ENCODE measurements at regions of chr3 and their contacts with region 1.

Region 1: GRCh38 chr3:45817831-45818522 is 21.6 kb upstream of the SLC6A20 start:
- DNase-seq: peak; percentile 82 to 89
- ATAC-seq: peak; percentile 77 to 81
- H3K4me3 ChIP-seq: no peak overlapping the region
- H3K27ac ChIP-seq: peak overlapping the region; percentile 82 to 96 (median 88)
- H3K4me1 ChIP-seq: peaks cover 41 to 66% of the 10 kb centered on the region in 2 donors
- H3K27me3 ChIP-seq: no peaks in the 10 kb centered on the region
- CTCF ChIP-seq: no peak
- POLR2A ChIP-seq: peak in 1 of 2 donors; percentile 13

Region 2: GRCh38 chr3:45123030-45123429 is 694.9 kb before region 1 on chr3:
- in situ Hi-C with region 1: no loop called
- intact Hi-C with region 1: loop called (anchors 5 kb)
- DNase-seq: peak; percentile 80 to 81
- ATAC-seq: peak; percentile 57 to 67
- H3K4me3 ChIP-seq: no peak overlapping the region
- H3K27ac ChIP-seq: peak overlapping the region; percentile 84 to 98 (median 88)
- H3K4me1 ChIP-seq: peaks cover 52 to 79% of the 10 kb centered on the region in 2 donors
- H3K27me3 ChIP-seq: no peaks in the 10 kb centered on the region
- CTCF ChIP-seq: no peak
- POLR2A ChIP-seq: peak in 1 of 2 donors; percentile 53

Region 3: DNA sequence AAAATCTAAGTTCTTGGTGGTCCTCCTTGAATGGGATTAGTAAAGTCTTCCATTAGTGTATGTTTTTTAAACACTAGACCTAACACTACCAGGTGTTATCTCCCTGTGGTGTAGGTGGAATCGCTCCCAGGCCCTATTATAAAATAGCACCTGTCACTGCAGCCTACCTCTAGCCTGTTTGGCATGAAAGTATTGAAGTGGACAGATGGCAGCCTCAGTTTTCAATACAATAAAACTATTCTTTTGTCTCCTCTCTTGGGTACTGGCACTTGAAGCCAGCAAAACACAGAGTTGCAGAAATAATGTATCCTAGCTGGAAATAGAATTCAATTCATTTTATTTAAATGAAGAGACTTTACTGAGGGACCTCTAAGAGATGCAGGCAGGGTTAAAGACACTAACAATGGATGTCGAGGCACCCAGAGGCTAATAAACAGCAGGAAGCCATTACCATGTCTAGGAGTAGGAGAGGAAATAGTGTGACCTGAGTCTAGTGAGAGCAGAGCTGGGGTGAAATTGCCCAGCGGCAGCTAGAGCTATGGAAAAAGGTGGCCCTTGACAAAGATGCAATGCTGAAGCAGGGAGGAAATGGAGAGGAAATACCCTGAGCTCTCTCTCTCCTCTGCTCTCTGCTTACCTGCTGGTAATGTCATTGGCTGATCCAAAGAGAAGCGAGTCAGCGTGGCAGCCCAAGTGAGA is 542.8 kb before region 1 on chr3:
- in situ Hi-C with region 1: no loop called
- intact Hi-C with region 1: no loop called
- DNase-seq: no peak
- ATAC-seq: no peak
- H3K4me3 ChIP-seq: no peak overlapping the region
- H3K27ac ChIP-seq: no peak overlapping the region
- H3K4me1 ChIP-seq: no peaks in the 10 kb centered on the region
- H3K27me3 ChIP-seq: no peaks in the 10 kb centered on the region
- CTCF ChIP-seq: no peak
- POLR2A ChIP-seq: no peak

Region 4: GRCh38 chr3:45688882-45689756 is 128.9 kb before region 1 on chr3 and contains the start of gene SACM1L:
- in situ Hi-C with region 1: no loop called
- intact Hi-C with region 1: loop called (anchors 2 kb)
- DNase-seq: peak; percentile 97 to 98
- ATAC-seq: peak; percentile 89 to 91
- H3K4me3 ChIP-seq: peak within 1 kb of the TSS; percentile 76 to 97 (median 82)
- H3K27ac ChIP-seq: peak within 1 kb of the TSS; percentile 89 to 95 (median 93)
- H3K4me1 ChIP-seq: peaks cover 52 to 57% of the 10 kb centered on the region in 2 donors
- H3K27me3 ChIP-seq: no peaks in the 10 kb centered on the region
- CTCF ChIP-seq: no peak
- POLR2A ChIP-seq: peak; percentile 82 to 89
- total RNA-seq, gene SACM1L: 7.7 to 28.7 (median 9.1) TPM

Region 5: GRCh38 chr3:45986303-45986982 is 168.5 kb after region 1 on chr3:
- in situ Hi-C with region 1: no loop called
- intact Hi-C with region 1: loop called (anchors 5 kb)
- DNase-seq: peak; percentile 75 to 80
- ATAC-seq: peak; percentile 45 to 48
- H3K4me3 ChIP-seq: peak overlapping the region in 1 of 4 donors; percentile 21
- H3K27ac ChIP-seq: peak overlapping the region; percentile 97 to 100 (median 100)
- H3K4me1 ChIP-seq: peaks cover 99 to 100% of the 10 kb centered on the region in 2 donors
- H3K27me3 ChIP-seq: no peaks in the 10 kb centered on the region
- CTCF ChIP-seq: no peak
- POLR2A ChIP-seq: peak; percentile 35 to 79